ENCODE measurements at regions of chr9 and their contacts with region 1.

Region 1: GRCh38 chr9:94188246-94188645 is 70.9 kb upstream of the ZNF169 start:
- DNase-seq: no peak
- ATAC-seq: no peak
- H3K4me3 ChIP-seq: no peak overlapping the region
- H3K27ac ChIP-seq: no peak overlapping the region
- H3K4me1 ChIP-seq: no peaks in the 10 kb centered on the region
- H3K27me3 ChIP-seq: no peaks in the 10 kb centered on the region
- CTCF ChIP-seq: no peak

Region 2: GRCh38 chr9:94199776-94200175 is 11.5 kb after region 1 on chr9:
- CTCF ChIA-PET with region 1: no interaction called
- POLR2A ChIA-PET with region 1: interaction called, 12 read pairs
- in situ Hi-C with region 1: no loop called
- intact Hi-C with region 1: no loop called
- DNase-seq: no peak
- ATAC-seq: no peak
- H3K4me3 ChIP-seq: no peak overlapping the region
- H3K27ac ChIP-seq: no peak overlapping the region
- H3K4me1 ChIP-seq: no peaks in the 10 kb centered on the region
- H3K27me3 ChIP-seq: no peaks in the 10 kb centered on the region
- CTCF ChIP-seq: no peak

Region 3: DNA sequence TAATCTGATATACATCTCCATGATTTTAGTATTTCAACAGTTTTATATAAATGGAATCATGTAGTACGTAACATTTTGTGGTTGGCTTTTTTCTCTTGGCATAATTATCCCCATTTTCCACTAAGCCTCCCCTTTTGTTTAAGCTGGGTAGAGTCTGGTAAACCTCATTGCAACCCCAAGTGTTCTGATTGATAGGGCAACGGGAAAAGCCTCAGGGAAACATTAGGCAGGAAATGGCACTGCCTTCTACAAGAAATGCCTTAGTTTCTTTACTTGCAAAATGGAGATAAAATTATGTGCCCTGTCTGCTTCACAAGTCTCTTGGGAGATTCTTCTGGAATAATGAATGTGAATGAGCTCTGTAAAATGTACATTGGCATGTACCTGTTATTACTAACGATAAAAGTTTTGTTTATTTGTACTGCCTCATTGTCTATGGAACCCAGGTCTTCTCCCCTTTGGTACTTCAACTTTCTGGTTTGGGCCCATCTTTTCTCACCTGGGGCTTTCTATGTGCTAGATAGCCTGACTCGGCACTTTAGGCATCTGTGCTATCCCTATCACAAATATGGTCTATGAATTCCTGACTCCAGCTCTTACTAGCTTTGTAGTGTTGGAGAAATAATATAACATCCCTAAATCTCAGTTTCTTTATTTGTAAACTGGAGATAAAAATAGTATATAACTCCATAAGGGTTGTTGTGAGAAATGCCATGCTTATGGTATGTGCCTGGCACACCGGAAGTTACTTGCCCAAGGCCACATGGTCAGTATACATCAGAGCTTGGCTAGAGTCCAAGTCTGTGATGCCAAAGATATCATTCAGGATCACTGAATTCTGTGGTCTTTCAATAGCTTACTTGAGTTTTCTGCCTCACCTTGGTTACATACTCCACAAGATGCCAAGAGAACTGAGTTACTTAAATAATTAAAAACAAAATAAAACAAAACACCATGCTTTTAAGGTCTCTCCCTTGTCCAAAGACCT is 22.7 kb after region 1 on chr9:
- CTCF ChIA-PET with region 1: no interaction called
- POLR2A ChIA-PET with region 1: no interaction called
- in situ Hi-C with region 1: no loop called
- intact Hi-C with region 1: no loop called
- DNase-seq: no peak
- ATAC-seq: no peak
- H3K4me3 ChIP-seq: no peak overlapping the region
- H3K27ac ChIP-seq: no peak overlapping the region
- H3K4me1 ChIP-seq: no peaks in the 10 kb centered on the region
- H3K27me3 ChIP-seq: no peaks in the 10 kb centered on the region
- CTCF ChIP-seq: no peak

Measured in Panc1 (cell line).